PC-3 (cell line): ENCODE measurements at regions of chr17 and their contacts with region 1.

Region 1: DNA sequence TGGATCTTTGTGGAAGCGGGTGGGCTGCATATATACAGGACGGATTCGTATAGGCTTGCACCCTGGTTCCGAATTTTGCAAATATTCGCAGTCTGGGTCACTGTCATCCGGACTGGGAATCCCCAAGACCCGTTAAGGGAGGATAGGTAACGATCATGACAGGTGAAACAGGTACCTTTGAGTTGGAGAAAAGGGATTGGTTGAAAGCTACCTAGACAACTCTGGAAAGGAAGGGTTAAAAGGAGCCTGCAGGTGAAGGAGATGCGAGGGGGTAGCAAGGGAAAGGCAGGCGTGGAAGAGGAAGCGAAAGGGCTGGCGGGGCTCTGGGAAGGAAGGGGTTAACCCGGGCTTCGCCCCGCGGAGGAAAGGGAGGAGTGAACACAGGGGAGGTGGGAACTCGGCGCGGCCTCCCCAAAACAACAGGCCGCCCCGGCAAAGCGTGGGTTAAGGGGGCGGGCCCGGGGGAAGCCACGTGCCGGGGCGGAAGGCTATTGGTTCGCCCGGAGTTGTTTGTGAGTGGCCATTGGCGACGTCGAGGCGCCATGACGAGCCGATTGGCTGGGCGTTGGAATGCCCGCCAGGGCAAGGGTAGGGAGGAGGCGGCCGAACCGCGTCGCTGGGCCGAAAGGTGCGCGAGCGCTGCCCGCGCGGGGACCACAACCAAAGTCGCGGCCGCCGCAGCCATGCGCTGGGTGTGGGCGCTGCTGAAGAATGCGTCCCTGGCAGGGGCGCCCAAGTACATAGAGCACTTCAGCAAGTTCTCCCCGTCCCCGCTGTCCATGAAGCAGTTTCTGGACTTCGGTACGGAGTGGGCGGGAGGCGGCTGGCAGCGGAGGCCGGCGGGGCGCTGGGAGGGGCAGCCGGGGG is at the start of gene PDK2:
- DNase-seq: peak; percentile 99
- ATAC-seq: peak; percentile 82
- H3K4me3 ChIP-seq: peak within 1 kb of the TSS; percentile 88
- H3K27ac ChIP-seq: peak within 1 kb of the TSS; percentile 20
- H3K4me1 ChIP-seq: peaks cover 14% of the 10 kb centered on the region
- H3K27me3 ChIP-seq: no peaks in the 10 kb centered on the region
- CTCF ChIP-seq: no peak
- total RNA-seq, gene PDK2: 31.9 and 37.6 TPM in 2 replicates

Region 2: GRCh38 chr17:49798182-49798581 is 296.8 kb before region 1 on chr17:
- CTCF ChIA-PET with region 1: no interaction called
- POLR2A ChIA-PET with region 1: no interaction called
- intact Hi-C with region 1: no loop called
- DNase-seq: no peak
- ATAC-seq: no peak
- H3K4me3 ChIP-seq: no peak overlapping the region
- H3K27ac ChIP-seq: no peak overlapping the region
- H3K4me1 ChIP-seq: no peaks in the 10 kb centered on the region
- H3K27me3 ChIP-seq: no peaks in the 10 kb centered on the region
- CTCF ChIP-seq: no peak

Region 3: GRCh38 chr17:50026901-50027630 is 67.9 kb before region 1 on chr17:
- CTCF ChIA-PET with region 1: interaction called, 10 read pairs
- POLR2A ChIA-PET with region 1: no interaction called
- intact Hi-C with region 1: loop called (anchors 2 kb)
- DNase-seq: peak; percentile 98
- ATAC-seq: peak; percentile 32
- H3K4me3 ChIP-seq: peak overlapping the region; percentile 62
- H3K27ac ChIP-seq: peak overlapping the region; percentile 96
- H3K4me1 ChIP-seq: peaks cover 31% of the 10 kb centered on the region
- H3K27me3 ChIP-seq: no peaks in the 10 kb centered on the region
- CTCF ChIP-seq: peak; percentile 97

Region 4: DNA sequence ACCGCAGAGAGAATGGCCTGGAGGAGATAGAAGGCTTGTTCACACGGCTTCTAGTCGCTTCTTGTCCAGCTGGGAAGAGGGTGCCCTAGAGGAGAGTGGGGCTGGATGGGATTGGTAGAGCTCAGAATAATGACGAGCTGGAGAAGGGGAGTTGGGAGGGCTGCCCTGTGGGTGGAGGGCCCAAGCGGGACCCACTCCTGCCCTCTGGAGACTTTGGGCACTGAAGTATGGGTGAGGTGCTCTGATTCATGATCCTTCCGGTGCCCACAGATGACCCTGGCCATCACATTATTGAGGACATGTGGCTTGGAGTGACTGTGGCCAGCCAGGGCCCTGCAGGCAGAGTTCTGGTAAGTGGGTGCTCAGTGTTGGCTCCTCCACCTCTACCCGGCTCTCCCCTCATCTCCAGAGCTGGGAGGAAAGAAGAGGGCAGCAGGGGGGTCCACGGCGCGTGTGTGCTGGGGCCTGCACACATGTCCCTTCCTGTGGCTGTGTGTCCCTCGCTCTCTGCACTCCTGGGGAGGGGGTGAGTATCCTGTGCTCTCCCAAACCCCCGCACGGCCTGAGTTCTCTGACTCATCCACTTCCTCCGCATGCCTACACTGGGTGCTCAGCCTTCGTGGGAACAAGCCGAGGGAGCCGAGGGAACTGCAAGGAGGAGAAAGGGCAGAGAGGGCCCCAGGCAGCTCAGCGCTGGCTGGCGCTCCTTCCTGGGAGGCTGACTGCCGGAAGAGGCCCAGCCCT is 30.6 kb before region 1 on chr17:
- CTCF ChIA-PET with region 1: interaction called, 9 read pairs
- POLR2A ChIA-PET with region 1: interaction called, 3 read pairs
- intact Hi-C with region 1: loop called (anchors 2 kb)
- DNase-seq: peak; percentile 100
- ATAC-seq: peak; percentile 58
- H3K4me3 ChIP-seq: peak overlapping the region; percentile 10; the same call in 1 of the 2 replicates
- H3K27ac ChIP-seq: peak overlapping the region; percentile 96
- H3K4me1 ChIP-seq: peaks cover 76% of the 10 kb centered on the region
- H3K27me3 ChIP-seq: no peaks in the 10 kb centered on the region
- CTCF ChIP-seq: no peak

Region 5: DNA sequence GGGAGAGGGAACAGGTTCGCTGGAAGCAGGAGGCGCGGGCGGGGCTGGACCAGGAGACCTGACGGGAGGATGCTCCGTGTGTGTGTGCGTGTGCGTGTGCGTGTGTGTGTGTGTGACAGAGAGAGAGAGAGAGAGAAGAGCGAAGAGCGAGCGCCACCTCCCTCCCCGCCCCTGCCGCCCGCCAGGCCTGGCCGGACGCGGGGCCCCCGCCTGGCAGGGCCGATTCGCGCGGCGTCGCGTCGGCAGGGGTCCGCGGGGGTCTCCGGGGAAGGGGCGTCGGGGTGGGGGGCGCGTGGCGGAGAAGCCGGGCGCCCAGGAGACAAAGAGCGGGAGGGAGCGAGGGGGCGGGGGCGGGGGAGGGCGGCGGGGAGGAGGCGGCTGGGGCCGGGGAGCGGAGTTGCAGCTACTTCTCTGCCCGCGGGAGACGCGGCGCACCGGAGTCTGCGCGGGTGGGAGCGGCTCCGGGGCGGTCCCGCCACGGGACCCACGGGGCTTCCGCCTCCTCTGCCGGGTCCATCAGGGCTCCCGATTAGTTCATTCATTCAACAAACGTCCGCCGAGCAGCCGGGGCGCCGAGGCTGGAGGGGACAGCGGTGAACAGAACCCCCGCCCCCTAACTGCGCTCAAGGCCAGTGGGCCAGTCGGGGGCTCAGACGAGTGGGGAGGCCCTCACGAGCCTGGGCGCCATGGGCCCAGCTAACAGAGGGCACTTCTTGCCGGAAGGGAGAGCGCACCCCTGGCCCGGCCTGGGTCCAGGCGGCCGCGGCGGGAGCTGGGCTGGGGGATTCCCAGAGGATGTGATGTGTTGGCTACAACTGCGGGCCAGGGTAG is 35.0 kb after region 1 on chr17 and contains the start of gene SAMD14:
- CTCF ChIA-PET with region 1: no interaction called
- POLR2A ChIA-PET with region 1: no interaction called
- intact Hi-C with region 1: no loop called
- DNase-seq: no peak
- ATAC-seq: peak; percentile 51
- H3K4me3 ChIP-seq: peak within 1 kb of the TSS; percentile 71
- H3K27ac ChIP-seq: no peak within 1 kb of the TSS
- H3K4me1 ChIP-seq: peaks cover 3% of the 10 kb centered on the region; the same call in 1 of the 2 replicates
- H3K27me3 ChIP-seq: peaks cover 17% of the 10 kb centered on the region
- CTCF ChIP-seq: no peak
- total RNA-seq, gene SAMD14: 0.11 and 0.17 TPM in 2 replicates

Region 6: DNA sequence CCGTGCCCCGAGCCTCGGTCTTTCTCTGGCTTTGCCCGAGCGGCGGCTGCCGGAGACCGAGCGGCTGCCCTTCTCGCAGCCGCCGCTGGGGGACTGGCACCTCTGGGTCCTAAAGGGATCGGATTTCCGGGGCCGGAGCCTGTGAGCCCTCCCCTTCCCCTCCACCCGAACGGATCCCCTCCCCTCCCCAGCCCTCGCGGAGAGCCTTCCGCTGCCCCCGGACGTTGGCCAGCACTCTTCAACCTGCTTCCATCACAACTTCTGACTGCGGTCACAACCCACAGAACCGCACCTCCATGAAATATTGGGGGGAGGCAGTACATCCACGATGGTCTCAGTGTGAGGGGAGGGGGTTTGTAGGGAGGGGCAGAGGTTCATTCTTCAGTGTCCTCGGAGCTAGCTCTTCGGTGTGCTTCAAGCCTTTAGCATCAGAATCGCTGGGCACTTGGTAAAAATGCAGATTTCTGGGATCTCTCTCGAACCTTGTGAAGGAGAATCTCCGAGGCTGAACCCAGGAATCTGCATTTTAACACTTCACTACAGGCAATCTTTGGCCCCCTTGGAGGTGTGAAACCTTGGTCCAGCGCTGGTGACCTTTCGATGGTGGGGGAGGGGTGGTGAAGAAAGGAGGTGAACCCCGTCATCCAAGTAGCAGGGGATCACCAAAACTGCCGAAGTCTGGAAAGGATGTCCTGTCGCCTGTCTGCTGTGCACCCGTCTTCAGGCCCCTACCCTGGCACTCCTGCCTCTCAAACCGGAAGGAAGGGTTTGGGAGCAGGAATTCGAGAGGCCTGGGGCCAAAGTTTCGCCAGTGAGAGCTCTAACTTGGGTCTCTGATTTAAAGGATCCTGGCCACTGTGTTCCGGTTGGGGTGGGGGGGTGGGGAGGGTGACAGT is 56.3 kb after region 1 on chr17:
- CTCF ChIA-PET with region 1: interaction called, 11 read pairs
- POLR2A ChIA-PET with region 1: no interaction called
- intact Hi-C with region 1: loop called (anchors 2 kb)
- DNase-seq: peak; percentile 97
- ATAC-seq: peak; percentile 57
- H3K4me3 ChIP-seq: peak overlapping the region; percentile 90
- H3K27ac ChIP-seq: peak overlapping the region; percentile 82
- H3K4me1 ChIP-seq: peaks cover 51% of the 10 kb centered on the region
- H3K27me3 ChIP-seq: no peaks in the 10 kb centered on the region
- CTCF ChIP-seq: peak; percentile 28; the same call in 1 of the 2 replicates

Region 7: DNA sequence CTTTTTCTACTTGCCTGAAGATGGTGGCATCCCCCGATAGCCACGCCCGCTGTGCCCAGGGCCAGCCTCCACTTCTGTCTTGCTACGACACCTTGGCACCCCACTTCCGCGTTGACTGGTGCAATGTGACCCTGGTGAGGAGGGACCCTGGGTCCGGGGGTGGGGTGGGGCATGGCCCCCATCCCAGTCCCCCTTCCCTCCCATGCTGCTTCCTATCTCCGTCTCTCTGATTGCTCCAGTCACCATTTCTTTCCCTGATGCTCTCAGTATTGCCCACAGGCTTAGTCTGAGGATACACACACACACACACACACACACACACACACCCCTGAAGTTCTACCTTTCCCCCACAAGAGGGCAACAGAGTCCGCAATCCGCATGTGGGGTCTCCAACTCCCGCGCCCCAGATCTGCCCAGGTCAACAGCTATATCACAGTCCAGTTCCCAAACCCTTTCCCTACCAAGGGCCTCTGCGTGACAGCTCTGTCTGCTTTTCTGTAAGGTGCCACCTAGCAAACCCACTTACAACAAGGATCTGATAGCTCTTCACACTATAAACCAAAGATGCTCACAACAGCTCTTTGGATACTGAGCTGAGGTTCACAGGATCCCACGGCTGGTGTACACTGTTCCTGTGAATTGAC is 74.3 kb after region 1 on chr17:
- CTCF ChIA-PET with region 1: interaction called, 17 read pairs
- POLR2A ChIA-PET with region 1: no interaction called
- intact Hi-C with region 1: no loop called
- DNase-seq: peak; percentile 80
- ATAC-seq: peak; percentile 51
- H3K4me3 ChIP-seq: peak overlapping the region; percentile 21; the same call in 1 of the 2 replicates
- H3K27ac ChIP-seq: peak overlapping the region; percentile 51
- H3K4me1 ChIP-seq: peaks cover 29% of the 10 kb centered on the region
- H3K27me3 ChIP-seq: no peaks in the 10 kb centered on the region
- CTCF ChIP-seq: peak; percentile 97

Region 8: DNA sequence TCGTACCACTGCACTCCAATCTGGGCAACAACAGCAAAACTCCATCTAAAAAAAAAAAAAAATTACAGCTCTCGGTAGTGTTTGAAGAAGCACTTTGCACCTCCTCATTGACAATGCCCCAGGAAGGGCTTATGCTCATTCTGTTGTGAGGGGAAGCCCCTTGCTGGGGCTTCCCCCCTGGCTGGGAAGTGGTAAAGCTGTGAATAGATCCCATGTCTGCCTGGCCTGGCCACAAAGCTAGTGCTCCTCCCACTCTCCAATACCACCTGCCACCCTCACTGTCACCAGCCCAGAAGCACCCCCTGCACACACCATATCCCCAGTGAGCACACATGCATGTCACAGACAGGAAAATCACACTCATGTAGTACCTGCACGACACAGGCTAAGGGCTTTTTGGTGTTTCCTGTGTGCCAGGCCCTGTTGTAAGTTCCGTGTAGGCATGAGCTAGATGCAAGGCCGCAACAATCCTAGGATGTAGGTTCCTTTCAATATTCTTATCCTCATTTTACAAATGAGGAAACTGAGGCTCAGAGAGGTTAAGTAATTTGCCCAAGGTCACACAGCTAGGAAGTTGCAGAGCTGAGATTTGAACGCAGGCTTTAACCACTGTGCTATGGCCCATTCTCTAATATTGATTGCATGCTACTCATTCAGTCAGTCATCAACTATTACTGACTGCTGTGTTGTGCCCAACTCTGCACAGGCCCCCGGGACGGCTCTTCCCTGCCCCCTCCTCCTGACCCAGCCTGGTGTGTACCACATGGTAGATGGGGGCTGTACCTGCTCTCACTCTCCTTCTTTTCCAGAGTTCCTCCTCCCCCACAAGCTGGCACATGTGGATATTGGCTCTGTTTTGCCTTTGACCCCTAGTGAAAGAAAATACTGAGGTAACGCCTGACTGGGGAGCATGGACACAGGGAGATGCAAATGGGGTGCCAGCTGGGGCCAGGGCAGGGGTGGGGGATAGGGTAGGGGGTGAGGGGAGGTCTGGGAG is 118.3 kb after region 1 on chr17:
- CTCF ChIA-PET with region 1: no interaction called
- POLR2A ChIA-PET with region 1: no interaction called
- intact Hi-C with region 1: no loop called
- DNase-seq: no peak
- ATAC-seq: no peak
- H3K4me3 ChIP-seq: no peak overlapping the region
- H3K27ac ChIP-seq: no peak overlapping the region
- H3K4me1 ChIP-seq: peaks cover 26% of the 10 kb centered on the region
- H3K27me3 ChIP-seq: no peaks in the 10 kb centered on the region
- CTCF ChIP-seq: no peak